ENCODE measurements at regions of chr10 and their contacts with region 1.

Region 1: GRCh38 chr10:24307696-24308485 is 99.0 kb downstream of the KIAA1217 start:
- DNase-seq: no peak
- ATAC-seq: no peak
- H3K4me3 ChIP-seq: no peak overlapping the region
- H3K27ac ChIP-seq: peak overlapping the region in 1 of 2 donors; percentile 63
- H3K4me1 ChIP-seq: peaks cover 0 to 2% of the 10 kb centered on the region in 2 donors
- H3K27me3 ChIP-seq: no peaks in the 10 kb centered on the region

Region 2: DNA sequence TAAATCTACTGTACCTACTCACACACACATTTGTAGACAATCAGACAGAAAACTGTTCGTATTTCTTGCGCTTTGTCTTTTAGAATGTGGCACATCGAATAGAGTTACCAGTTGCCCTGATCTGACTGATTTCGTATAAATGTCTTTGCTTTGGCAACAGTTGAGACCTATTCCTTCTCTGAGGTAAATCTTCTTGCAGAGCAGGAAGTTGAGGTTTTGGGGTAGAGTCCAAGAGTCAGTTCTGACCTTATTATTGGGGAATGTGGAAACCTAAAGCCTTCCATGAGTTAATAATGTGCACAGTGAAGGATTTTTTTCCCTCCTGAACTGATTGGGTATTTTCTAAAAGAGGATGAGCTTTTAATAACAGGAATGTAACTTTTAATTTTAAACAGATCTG is 36.4 kb after region 1 on chr10:
- intact Hi-C with region 1: loop called in 1 of 2 experiments (anchors 5 kb)
- DNase-seq: no peak
- ATAC-seq: no peak
- H3K4me3 ChIP-seq: peak overlapping the region in 1 of 2 donors; percentile 54
- H3K27ac ChIP-seq: peak overlapping the region; percentile 35 to 87
- H3K4me1 ChIP-seq: peaks cover 0 to 4% of the 10 kb centered on the region in 2 donors
- H3K27me3 ChIP-seq: no peaks in the 10 kb centered on the region